Posterior cingulate gyrus (tissue), 11 donors: ENCODE measurements at regions of chr2 and their contacts with region 1.

Region 1: DNA sequence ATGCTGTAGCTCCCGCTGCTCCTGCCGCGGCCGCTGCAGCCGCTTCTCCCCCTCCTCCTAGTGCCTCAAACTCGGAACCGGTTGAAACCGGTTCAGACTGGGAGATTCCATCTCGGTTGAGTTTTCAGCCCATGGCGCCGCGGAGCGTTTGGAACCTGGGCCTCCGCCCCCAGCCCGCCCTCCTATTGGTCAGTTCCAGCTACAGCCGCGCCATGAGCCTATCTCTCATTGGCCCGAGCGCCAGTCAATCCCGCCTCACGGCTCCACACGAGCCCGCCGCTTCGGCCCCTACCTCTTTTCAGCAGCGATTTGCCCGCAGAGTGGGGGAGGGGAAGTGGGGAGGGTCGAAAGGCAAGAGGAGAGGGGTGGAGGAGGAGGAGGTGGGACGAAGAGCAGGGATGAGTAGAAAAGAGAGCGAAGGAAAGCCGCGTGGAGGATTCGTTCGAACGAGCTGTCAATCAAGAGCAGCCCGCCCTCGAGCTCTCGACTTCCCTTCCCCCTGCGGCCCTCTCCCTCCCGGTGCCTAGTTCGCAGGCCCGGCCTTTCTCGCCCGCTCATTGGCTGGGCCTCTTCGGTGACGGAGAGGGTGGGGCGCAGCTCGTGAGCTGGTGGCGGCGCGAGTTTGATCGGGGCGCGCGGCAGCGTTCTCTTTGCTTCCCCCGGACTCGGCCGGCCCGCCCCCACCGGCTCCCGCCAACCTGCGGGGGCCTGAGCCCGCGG is at the start of gene XPO1:
- DNase-seq: peak; percentile 99 to 100 (median 100)

Region 2: DNA sequence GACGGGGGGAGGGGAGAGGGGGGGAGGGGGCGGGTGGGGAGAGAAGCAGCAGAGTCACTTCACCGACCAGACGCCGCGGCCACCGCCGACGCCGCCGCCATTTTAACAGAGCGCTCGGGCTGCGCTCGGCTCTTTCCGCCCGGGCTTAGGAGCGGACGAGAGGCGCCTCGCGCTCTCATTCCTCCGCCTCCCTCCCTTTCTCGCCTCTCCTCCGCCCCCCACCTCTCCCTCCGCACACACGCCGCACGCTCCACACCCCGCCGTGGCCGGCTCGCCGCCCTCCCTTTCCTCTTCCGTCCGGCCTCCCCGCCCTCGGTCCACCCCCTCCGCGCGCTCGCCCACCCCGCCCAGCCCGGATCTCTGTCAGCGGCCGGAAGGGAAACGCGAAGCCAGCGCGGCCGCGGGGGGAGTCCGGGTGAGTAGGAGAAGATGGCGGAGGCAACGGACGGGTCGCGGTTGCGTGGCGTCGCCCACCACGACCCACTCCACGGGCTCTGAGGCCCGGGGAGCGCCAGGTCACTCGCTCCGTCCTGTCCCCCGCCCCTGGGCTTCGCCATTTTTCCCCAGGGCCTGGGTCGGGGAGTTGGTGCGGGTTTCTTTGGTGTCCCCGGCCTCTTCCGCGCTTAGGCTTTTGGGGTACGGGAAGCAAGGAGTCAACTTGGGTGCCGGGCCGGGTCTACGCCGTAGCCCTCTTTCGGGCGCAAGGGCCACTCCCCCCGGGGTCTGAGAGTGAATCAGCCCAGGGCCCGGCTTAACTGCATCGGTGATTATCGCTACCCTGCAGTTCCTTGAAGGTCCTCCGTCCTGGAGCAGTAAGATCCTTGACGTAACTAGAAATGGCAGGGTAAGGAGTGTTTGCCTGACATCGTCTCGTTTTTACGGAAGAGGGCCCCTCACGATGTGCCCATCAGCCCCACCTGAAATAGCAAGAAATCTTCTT is 67.1 kb before region 1 on chr2 and contains the start of gene USP34:
- intact Hi-C with region 1: loop called (anchors 1 kb)
- DNase-seq: peak; percentile 84 to 98 (median 92)

Region 3: GRCh38 chr2:61620244-61621159 is 82.1 kb after region 1 on chr2:
- intact Hi-C with region 1: no loop called
- DNase-seq: no peak

Region 4: DNA sequence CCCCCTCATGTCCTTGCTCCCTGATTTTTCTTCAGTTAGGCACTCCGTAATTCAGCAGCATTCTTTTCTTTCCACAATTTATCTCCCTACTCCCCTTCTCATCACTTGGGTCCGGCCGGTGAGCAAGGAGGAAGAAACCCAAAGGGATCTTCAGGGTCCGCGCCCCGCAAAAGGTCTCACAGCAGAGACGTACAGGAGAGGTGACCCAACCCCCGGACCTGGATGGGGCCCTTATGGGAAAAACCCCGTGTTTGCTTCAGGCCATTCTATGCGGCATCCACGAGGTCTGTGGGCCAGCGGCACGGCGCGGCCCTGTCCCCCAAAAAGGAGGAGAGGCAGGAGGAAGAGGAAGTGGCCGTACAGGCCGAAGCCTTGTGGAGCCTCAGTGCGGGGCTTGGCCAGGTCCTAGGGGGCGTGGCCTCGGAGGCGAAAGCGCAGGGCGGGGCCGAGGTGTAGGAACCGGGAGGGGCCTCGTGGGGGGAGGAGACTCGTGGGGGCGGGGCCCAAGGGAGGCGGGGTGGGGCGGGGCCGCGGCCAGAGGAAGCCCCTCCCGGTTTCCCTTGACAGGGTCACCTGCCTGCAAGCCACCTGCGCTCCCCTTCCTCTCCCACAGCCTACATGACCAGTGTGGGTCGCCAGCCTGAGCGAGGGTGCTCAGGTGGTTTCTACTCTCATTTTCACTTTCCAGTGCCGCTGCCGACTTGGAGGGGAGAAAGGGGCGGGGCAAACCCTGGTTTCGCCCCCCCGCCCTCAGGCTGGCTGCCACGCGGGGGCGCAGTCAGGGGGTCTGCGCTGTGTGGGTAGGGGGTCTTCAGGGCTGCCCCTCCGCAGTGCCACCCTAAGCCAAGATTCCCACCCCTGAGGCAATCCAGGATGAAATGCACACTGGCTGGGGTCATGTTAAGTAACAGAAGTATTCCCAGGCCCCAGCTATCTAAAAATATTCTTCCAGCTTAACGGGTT is 156.2 kb after region 1 on chr2:
- intact Hi-C with region 1: loop called (anchors 10 kb)
- DNase-seq: peak; percentile 86 to 99 (median 92)